ENCODE measurements at regions of chr2 and their contacts with region 1.

Region 1: DNA sequence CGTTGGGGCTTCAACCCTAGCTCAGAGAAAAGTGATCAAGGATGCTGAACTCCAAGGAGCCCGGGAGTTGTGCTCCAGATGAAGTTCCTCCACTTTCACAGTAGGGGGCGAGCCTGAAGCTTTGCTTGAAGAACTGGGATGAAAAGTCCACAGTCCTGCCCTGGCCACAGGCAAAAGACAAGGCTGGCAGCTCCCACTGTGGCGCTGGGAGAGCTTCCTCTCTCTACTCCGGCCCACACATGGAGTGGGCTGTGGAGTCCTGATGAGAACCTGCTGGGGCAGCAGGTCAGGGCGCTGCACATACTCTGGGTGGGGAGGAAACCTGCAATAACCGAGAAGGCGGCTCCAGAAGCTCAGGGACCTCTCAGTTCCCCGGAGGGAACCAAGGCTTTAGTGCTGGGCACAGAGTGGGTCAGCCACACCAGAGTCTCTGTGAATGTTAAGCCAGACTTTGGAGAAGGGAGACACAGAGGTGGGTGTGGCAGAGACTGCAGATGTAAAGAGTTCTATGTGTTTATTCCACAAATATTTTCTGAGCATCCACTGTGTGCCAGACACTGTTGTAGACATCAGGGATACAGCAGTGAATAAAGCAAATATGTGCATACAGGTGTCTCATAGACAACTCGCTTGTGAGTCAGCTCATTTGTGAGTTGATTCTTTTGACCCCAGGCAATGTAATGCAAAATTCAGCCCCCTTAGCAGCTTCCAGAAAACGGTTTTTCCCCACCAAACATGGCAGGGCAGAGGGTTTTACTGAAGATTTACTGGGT is 48.0 kb upstream of the MRPL33 start:
- DNase-seq: peak in 1 of 2 experiments; percentile 81
- H3K4me3 ChIP-seq: no peak overlapping the region
- H3K27ac ChIP-seq: no peak overlapping the region
- H3K4me1 ChIP-seq: peaks cover 8 to 21% (median 10%) of the 10 kb centered on the region in 4 experiments
- H3K27me3 ChIP-seq: no peaks in the 10 kb centered on the region
- CTCF ChIP-seq: peak; percentile 51 to 84 (median 54)
- EP300 ChIP-seq: no peak
- POLR2A ChIP-seq: no peak
- RAD21 ChIP-seq: peak; percentile 62 to 64

Region 2: GRCh38 chr2:27638037-27638637 is 85.4 kb before region 1 on chr2:
- CTCF ChIA-PET with region 1: no interaction called
- POLR2A ChIA-PET with region 1: no interaction called
- DNase-seq: no peak
- H3K4me3 ChIP-seq: no peak overlapping the region
- H3K27ac ChIP-seq: no peak overlapping the region
- H3K4me1 ChIP-seq: no peaks in the 10 kb centered on the region
- H3K27me3 ChIP-seq: no peaks in the 10 kb centered on the region
- CTCF ChIP-seq: no peak
- EP300 ChIP-seq: no peak
- POLR2A ChIP-seq: no peak
- RAD21 ChIP-seq: no peak

Region 3: GRCh38 chr2:27703638-27704341 is 19.8 kb before region 1 on chr2:
- CTCF ChIA-PET with region 1: interaction called, 18 read pairs
- POLR2A ChIA-PET with region 1: interaction called, 3 read pairs
- DNase-seq: peak; percentile 77 to 94
- H3K4me3 ChIP-seq: no peak overlapping the region
- H3K27ac ChIP-seq: no peak overlapping the region
- H3K4me1 ChIP-seq: peaks cover 0 to 4% (median under 1%) of the 10 kb centered on the region in 4 experiments; a peak in 3 of 7 replicates
- H3K27me3 ChIP-seq: no peaks in the 10 kb centered on the region; a peak in 1 of 7 replicates
- CTCF ChIP-seq: peak; percentile 88 to 96 (median 89)
- EP300 ChIP-seq: no peak
- POLR2A ChIP-seq: no peak
- RAD21 ChIP-seq: peak; percentile 91 to 93

Region 4: GRCh38 chr2:27735263-27735953 is 11.8 kb after region 1 on chr2:
- CTCF ChIA-PET with region 1: interaction called, 36 read pairs
- POLR2A ChIA-PET with region 1: interaction called, 10 read pairs
- DNase-seq: peak; percentile 47 to 86
- H3K4me3 ChIP-seq: peak overlapping the region; percentile 55 to 65 (median 56)
- H3K27ac ChIP-seq: peak overlapping the region; percentile 54; the same call in 1 of the 2 replicates
- H3K4me1 ChIP-seq: peaks cover 5 to 12% (median 7%) of the 10 kb centered on the region in 4 experiments
- H3K27me3 ChIP-seq: no peaks in the 10 kb centered on the region; a peak in 1 of 7 replicates
- CTCF ChIP-seq: no peak
- EP300 ChIP-seq: no peak
- POLR2A ChIP-seq: peak; percentile 62 to 79
- RAD21 ChIP-seq: peak in 1 of 2 experiments; percentile 14; a peak in 1 of 4 replicates

Region 5: DNA sequence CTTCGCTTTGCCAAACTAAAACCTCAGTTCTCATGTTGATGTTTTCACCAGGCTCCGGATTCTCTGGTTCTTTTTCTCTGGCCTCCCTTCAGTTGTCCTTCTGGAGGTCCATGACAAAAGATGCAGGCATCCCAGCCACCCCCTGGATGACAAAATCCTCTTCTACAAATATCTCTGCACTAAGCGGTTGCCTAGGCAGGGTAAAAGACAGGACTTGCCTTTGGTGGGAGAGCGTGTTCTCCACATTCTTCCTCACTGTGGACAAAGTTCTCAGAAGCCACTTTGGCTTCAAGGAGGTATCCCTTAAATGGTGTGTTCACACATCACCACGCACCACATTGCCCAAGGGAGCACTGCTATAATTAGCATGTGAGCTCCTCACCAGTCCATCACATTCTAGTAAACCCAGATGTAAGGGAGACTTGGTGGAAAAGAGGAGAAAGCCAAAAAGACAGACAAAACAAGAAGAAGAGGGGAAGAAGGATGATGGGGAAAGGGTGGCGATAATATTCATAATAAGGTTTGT is 24.3 kb after region 1 on chr2:
- CTCF ChIA-PET with region 1: interaction called, 36 read pairs
- POLR2A ChIA-PET with region 1: interaction called, 24 read pairs
- DNase-seq: no peak
- H3K4me3 ChIP-seq: no peak overlapping the region
- H3K27ac ChIP-seq: no peak overlapping the region
- H3K4me1 ChIP-seq: peaks cover 3 to 10% (median 6%) of the 10 kb centered on the region in 4 experiments; a peak in 6 of 7 replicates
- H3K27me3 ChIP-seq: no peaks in the 10 kb centered on the region; a peak in 1 of 7 replicates
- CTCF ChIP-seq: no peak
- EP300 ChIP-seq: no peak
- POLR2A ChIP-seq: no peak
- RAD21 ChIP-seq: no peak